ENCODE measurements at regions of chr5 and their contacts with region 1.

Region 1: DNA sequence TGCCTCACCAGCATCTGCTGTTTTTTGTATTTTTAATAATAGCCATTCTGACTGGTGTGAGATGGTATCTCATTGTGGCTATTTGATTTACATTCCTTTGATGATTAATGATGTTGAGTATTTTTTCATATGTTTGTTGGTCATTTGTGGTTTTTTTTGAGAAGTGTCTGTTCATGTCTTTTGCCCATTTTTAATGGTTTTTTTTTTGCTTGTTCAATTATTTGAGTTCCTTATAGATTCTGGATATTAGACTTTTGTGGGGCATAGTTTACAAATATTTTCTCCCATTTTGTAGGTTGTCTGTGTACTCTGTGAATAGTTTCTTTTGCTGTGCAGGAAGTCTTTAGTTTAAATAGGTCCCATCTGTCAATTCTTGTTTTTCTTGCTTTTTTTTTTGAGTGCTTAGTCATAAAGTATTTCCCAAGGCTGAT is 148.1 kb downstream of the NPR3 start:
- DNase-seq: no peak
- ATAC-seq: no peak
- H3K4me3 ChIP-seq: no peak overlapping the region
- H3K27ac ChIP-seq: no peak overlapping the region
- H3K4me1 ChIP-seq: no peaks in the 10 kb centered on the region
- H3K27me3 ChIP-seq: no peaks in the 10 kb centered on the region

Region 2: GRCh38 chr5:32916648-32917047 is 57.4 kb after region 1 on chr5:
- intact Hi-C with region 1: no loop called
- DNase-seq: no peak
- ATAC-seq: no peak
- H3K4me3 ChIP-seq: no peak overlapping the region
- H3K27ac ChIP-seq: no peak overlapping the region
- H3K4me1 ChIP-seq: no peaks in the 10 kb centered on the region
- H3K27me3 ChIP-seq: no peaks in the 10 kb centered on the region

Region 3: GRCh38 chr5:32984851-32985610 is 125.8 kb after region 1 on chr5:
- intact Hi-C with region 1: no loop called
- DNase-seq: no peak
- ATAC-seq: no peak
- H3K4me3 ChIP-seq: no peak overlapping the region
- H3K27ac ChIP-seq: no peak overlapping the region
- H3K4me1 ChIP-seq: no peaks in the 10 kb centered on the region
- H3K27me3 ChIP-seq: no peaks in the 10 kb centered on the region

Region 4: GRCh38 chr5:33241802-33242201 is 382.6 kb after region 1 on chr5:
- intact Hi-C with region 1: loop called in 1 of 2 experiments (anchors 5 kb)
- DNase-seq: peak in 1 of 2 donors; percentile 50
- ATAC-seq: no peak
- H3K4me3 ChIP-seq: no peak overlapping the region
- H3K27ac ChIP-seq: no peak overlapping the region
- H3K4me1 ChIP-seq: no peaks in the 10 kb centered on the region
- H3K27me3 ChIP-seq: no peaks in the 10 kb centered on the region

Measured in aorta (tissue), 5 donors.